ENCODE measurements at regions of chr14 and their contacts with region 1.

Region 1: DNA sequence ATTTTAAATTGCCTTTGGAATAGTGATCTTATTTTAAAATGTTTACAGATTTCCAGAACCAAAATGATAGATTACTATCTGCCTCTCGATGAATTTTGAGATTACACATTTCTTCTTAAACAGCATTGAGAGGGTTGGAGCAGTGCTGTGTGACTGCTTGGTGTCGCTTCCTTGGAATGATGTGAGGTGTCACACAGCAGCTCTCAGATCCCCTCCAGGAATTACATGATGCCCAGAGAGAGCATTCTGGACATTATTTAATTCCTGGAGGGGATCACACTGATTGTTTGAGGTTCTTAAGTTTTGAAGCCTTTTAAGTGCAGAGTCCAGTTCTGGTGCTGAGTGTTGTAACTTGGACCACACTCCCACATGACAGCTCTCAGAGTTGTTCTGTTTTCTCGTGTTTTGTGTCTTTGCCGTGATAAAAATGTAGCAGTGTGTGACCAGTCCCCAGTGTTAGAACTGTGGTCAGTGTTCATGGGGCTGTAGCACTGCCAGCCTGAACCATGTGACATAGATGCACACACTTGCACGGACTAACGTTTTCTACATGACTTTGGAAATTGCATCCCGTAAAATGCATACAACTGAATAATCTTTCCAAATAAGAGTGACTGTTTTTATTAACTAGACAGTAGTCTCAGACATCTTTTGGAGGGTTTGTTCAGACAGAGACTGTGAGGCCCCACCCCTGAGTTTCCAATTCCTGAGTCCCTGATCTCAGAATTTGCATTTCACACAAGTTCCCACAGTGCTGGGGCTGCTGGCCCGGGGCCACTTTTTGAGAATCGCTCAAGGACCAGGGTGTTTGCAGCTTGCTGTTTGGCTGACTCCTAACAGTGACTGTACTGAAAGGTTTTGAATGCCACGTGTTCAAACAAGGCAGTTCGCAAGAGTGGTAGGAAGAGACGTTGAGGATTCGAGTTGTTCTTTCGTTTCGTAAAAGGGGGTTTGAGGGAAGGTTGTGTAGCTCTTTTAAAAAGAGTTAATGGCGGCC is 26.0 kb downstream of the XRCC3 start:
- DNase-seq: no peak
- ATAC-seq: peak; percentile 48 to 73 (median 62)
- H3K4me3 ChIP-seq: no peak overlapping the region
- H3K27ac ChIP-seq: peak overlapping the region in 3 of 10 donors; percentile 3 to 56 (median 17)
- H3K4me1 ChIP-seq: peaks cover 0 to 61% (median 31%) of the 10 kb centered on the region in 9 donors
- H3K27me3 ChIP-seq: no peaks in the 10 kb centered on the region
- CTCF ChIP-seq: no peak

Region 2: DNA sequence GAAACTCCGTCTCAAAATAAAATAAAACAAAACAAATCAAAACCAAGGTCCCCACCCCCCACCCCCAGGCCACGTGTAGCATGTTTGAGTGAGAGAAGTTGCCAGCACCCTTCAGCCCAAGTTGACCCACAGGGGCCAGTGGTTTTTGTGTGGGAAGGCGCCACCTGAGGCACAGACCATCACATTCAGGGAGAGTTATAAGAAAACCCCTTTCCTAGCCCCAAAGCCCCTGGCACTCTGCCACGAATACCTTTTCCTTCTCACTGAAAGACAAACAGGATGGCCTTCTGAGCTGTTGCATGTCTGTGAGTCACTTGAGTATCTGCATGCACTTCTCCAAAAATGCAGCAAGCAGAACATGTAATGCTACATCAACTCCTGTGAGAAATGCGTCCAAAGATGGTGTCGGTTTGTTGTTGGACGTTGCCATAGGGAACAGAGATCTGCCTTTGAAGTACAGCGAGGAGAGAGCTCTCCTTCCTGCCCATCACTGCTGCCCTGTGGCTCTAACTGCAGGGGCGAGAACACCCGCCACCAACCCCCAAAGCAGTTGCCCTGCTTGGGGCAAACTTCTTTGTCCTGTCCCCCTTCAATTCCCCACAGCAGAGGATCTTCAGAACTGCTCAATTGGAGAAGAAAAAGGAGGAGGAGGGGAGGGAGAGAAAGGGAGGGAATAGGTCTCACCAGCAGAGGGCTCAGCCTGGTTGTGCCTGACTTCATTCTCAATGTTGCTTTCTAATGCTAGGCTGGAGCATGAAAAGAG is 914.6 kb before region 1 on chr14:
- intact Hi-C with region 1: no loop called
- DNase-seq: peak in 1 of 2 donors; percentile 39
- ATAC-seq: peak in 6 of 8 donors; percentile 50 to 78 (median 70)
- H3K4me3 ChIP-seq: no peak overlapping the region
- H3K27ac ChIP-seq: no peak overlapping the region
- H3K4me1 ChIP-seq: peaks cover 0 to 34% (median 12%) of the 10 kb centered on the region in 9 donors
- H3K27me3 ChIP-seq: peaks cover 0 to 8% (median 0%) of the 10 kb centered on the region in 7 donors
- CTCF ChIP-seq: peak; percentile 26 to 75 (median 64)

Region 3: GRCh38 chr14:103628684-103629502 is 60.3 kb before region 1 on chr14 and contains the start of gene KLC1:
- intact Hi-C with region 1: loop called in 1 of 10 experiments (anchors 2 kb)
- DNase-seq: peak; percentile 87 to 92
- ATAC-seq: peak; percentile 77 to 93 (median 90)
- H3K4me3 ChIP-seq: peak within 1 kb of the TSS; percentile 69 to 100 (median 98)
- H3K27ac ChIP-seq: peak within 1 kb of the TSS; percentile 87 to 100 (median 99)
- H3K4me1 ChIP-seq: peaks cover 13 to 74% (median 66%) of the 10 kb centered on the region in 9 donors
- H3K27me3 ChIP-seq: no peaks in the 10 kb centered on the region
- CTCF ChIP-seq: peak in 1 of 9 donors; percentile 22
- total RNA-seq, gene KLC1: 123 to 166 (median 146) TPM

Measured in heart right ventricle (tissue), 16 donors.